Ascending aorta (tissue), 2 donors: ENCODE measurements at regions of chr22 and their contacts with region 1.

Region 1: DNA sequence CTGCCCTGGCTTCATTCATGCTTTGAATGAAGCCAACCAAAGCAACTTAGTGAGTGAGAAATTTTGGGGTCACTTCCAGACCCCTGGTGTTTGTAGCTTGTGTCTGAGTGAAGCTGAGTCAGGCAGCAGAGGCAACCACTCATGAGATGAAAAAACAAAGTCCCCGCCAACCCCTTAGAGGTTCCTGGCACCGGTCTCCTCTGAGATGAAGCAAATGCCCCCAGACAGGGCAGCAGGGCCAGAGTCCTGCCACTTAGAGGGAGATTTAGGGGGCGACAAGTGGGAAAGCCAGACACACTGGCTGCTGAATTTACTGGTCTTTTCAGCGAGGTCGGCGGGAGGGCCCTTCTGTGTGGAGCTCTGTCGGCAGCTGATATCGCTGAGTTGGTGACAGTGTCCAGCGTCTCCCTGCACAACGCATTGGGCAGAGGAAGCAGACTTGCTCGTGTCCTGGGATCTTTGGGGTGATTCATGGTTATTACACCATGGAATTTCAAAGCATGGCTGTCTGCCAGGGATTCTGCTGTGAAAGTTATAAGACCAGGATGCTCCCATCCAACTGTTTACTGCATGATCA is 482.6 kb downstream of the MIAT start:
- DNase-seq: peak in 1 of 2 donors; percentile 75
- H3K4me3 ChIP-seq: no peak overlapping the region
- H3K27ac ChIP-seq: no peak overlapping the region
- H3K4me1 ChIP-seq: peaks cover 0 to 8% of the 10 kb centered on the region in 2 donors
- H3K27me3 ChIP-seq: no peaks in the 10 kb centered on the region
- CTCF ChIP-seq: no peak

Region 2: GRCh38 chr22:27124351-27124966 is 15.6 kb before region 1 on chr22:
- intact Hi-C with region 1: no loop called
- DNase-seq: peak; percentile 23 to 74
- H3K4me3 ChIP-seq: peak overlapping the region in 1 of 2 donors; percentile 44
- H3K27ac ChIP-seq: peak overlapping the region; percentile 42 to 68
- H3K4me1 ChIP-seq: peaks cover 0 to 3% of the 10 kb centered on the region in 2 donors
- H3K27me3 ChIP-seq: no peaks in the 10 kb centered on the region
- CTCF ChIP-seq: no peak

Region 3: DNA sequence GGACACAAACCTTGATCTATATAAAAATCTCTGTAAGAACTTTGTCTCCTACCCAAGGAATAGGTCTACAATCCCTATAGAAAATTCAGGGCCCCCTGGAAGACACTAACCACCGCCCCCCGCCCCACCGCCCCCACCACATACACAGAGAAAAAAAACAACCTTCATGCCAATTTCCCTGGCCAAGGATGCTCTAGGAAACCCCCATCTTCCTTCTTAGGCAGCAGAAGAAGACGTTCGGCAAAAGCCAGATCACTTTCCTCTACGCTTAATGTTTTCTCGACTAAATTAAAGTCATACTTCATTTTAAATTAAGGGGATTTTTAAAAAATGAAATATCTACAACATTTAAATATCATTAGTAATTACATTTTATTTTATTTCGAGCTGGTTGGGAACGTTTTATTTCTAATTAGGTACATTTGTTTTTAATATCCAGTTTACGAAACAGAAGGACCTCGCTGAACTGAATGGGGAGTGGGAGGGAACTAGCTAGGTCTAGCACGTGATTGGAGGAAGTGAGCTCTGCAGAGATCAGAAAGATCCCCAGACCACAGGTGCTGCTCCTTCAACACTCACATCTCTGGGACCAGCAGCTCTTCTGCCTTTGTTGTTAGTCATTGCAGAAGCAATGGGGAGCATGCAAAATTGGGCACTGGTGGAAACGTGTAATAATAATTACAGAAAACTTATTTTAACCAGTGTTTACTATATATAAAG is 189.3 kb after region 1 on chr22:
- intact Hi-C with region 1: loop called (anchors 10 kb)
- DNase-seq: no peak
- H3K4me3 ChIP-seq: no peak overlapping the region
- H3K27ac ChIP-seq: no peak overlapping the region
- H3K4me1 ChIP-seq: no peaks in the 10 kb centered on the region
- H3K27me3 ChIP-seq: no peaks in the 10 kb centered on the region
- CTCF ChIP-seq: no peak